Gastrocnemius medialis (tissue), 4 donors: ENCODE measurements at regions of chr20 and their contacts with region 1.

Region 1: DNA sequence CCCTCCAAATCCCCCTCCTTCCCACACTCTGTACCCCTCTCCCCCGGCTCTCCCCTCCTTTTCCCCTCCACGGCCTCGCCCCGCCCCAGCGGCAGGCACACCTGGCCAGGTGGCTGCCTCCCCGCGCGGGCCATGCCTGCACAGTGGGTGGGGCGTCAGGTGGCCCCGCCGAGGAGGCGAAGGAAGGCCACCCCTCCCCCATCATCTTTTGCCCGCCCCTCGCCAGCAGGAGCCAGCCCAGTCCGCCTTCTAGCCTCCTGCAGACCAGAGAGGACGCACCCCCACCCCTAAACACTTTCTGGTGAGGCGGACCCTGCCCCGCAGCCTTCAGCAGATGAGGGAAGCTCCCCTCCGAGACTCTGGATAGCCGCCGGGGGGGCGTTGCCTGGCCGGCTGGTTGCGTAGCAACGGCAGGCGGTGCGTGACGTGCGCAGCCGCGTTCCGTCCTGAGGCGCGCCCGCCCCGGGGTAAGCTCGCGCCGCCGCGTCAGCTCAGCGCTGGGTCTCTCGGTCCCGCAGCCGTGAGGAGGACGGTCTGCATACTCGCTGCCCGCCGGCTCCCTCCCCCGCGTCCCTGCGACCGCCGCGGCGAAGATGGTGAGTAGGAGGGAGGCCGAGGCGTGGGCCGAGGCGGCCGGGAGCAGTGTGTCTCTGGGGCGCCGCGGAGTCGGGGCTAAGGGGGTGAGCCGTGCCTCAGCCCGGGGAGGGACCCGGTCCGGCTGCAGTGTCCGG is at the start of gene DSTN:
- DNase-seq: peak; percentile 85 to 86
- ATAC-seq: peak; percentile 88 to 89
- H3K4me3 ChIP-seq: peak within 1 kb of the TSS; percentile 96 to 99 (median 98)
- H3K27ac ChIP-seq: peak within 1 kb of the TSS; percentile 99 to 100 (median 99)
- H3K4me1 ChIP-seq: peaks cover 22 to 38% of the 10 kb centered on the region in 2 donors
- H3K27me3 ChIP-seq: no peaks in the 10 kb centered on the region
- CTCF ChIP-seq: peak in 1 of 5 experiments; percentile 10
- POLR2A ChIP-seq: peak; percentile 97 to 98
- total RNA-seq, gene DSTN: 79.2 to 128 (median 88.5) TPM

Region 2: GRCh38 chr20:17542993-17543412 is 26.8 kb before region 1 on chr20:
- in situ Hi-C with region 1: no loop called
- intact Hi-C with region 1: loop called (anchors 2 kb)
- DNase-seq: no peak
- ATAC-seq: peak; percentile 61 to 69
- H3K4me3 ChIP-seq: no peak overlapping the region
- H3K27ac ChIP-seq: peak overlapping the region; percentile 26 to 53 (median 46)
- H3K4me1 ChIP-seq: no peaks in the 10 kb centered on the region
- H3K27me3 ChIP-seq: peaks cover 0 to 2% (median 0%) of the 10 kb centered on the region in 3 donors
- CTCF ChIP-seq: no peak
- POLR2A ChIP-seq: no peak

Region 3: GRCh38 chr20:17611540-17612286 is 41.9 kb after region 1 on chr20:
- in situ Hi-C with region 1: no loop called
- intact Hi-C with region 1: loop called (anchors 5 kb)
- DNase-seq: no peak
- ATAC-seq: no peak
- H3K4me3 ChIP-seq: no peak overlapping the region
- H3K27ac ChIP-seq: peak overlapping the region in 3 of 4 donors; percentile 10 to 41 (median 29)
- H3K4me1 ChIP-seq: peaks cover 0 to 7% of the 10 kb centered on the region in 2 donors
- H3K27me3 ChIP-seq: no peaks in the 10 kb centered on the region
- CTCF ChIP-seq: peak in 1 of 5 experiments; percentile 24
- POLR2A ChIP-seq: no peak

Region 4: DNA sequence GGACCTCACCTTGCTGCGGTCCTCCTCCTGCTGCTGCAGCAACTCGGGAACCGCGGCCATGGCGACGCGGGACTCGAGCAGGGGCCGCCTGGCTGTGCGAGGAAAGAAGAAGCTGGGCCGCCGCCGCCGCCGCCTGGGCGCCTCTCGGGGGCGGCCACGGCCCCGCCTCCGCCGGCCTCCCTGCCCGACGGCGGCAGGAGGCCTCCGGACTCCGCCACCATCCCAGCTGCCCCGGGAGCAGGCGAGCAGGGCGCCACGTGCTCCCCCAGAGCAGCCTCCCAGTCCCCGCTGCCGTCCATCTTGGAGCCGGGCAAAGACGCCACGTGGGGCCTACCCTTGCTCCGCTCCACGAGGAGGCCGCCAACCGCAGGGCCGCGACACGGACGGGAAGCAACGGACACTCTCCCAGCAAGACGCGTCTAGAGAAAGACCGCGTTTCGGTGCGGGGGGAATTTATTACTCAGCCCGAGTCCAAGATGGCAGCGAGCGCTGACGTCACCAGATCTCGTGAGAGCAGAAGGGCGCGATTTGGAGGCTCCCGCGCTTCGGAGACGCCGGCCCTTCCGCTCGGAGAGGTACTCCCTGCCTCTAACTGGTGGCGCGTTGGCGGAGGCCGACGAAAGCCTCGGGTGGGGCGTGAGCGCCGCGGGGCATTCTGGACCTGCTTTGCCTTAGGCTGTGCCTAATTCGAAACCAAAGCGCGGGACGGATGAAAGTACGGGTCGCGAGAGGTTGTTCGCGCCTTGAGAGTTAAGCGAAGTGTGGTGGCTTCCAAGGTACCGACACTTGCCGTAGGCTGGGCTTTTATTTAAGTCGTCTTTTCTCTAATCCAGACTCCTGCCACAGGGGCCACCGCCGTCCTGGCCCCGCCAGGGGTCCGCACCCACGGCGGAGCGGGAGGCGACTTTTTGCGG is 398.8 kb after region 1 on chr20 and contains the starts of genes MGME1 and SNX5:
- in situ Hi-C with region 1: no loop called
- intact Hi-C with region 1: loop called (anchors 5 kb)
- DNase-seq: peak; percentile 99
- ATAC-seq: peak; percentile 82 to 85
- H3K4me3 ChIP-seq: peak within 1 kb of the TSS; percentile 91 to 97 (median 94)
- H3K27ac ChIP-seq: peak within 1 kb of the TSS; percentile 93 to 99 (median 96)
- H3K4me1 ChIP-seq: peaks cover 75 to 76% of the 10 kb centered on the region in 2 donors
- H3K27me3 ChIP-seq: no peaks in the 10 kb centered on the region
- CTCF ChIP-seq: no peak
- POLR2A ChIP-seq: peak; percentile 55 to 68
- total RNA-seq, gene MGME1: 5.2 to 9.1 (median 7.2) TPM
- total RNA-seq, gene SNX5: 49.8 to 88.8 (median 60.9) TPM